CD14-positive monocyte (primary cell): ENCODE measurements at regions of chr18 and their contacts with region 1.

Region 1: DNA sequence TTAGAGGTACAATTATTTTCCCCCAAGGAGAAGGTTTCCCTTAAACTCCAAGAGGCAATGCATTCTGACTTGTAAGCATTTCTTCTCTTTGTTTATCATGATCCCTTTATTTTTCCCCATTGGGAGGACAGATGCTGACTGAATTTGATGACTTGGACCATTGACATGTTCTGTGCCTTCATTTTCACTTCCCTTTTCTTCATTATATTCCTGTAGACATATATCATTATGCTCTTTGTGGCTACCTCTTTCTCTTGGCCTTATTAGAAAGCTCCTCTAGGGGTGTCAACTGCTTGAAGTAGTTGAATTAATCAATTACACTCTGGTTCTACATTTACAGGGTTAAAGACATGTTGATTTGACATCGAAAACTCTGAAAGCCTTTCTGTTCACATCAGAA is 330.0 kb upstream of the DCC start:
- DNase-seq: no peak
- H3K4me3 ChIP-seq: no peak overlapping the region
- H3K4me3 Mint-ChIP-seq: no peak overlapping the region
- H3K27ac ChIP-seq: no peak overlapping the region
- H3K27ac Mint-ChIP-seq: no peak overlapping the region
- H3K4me1 ChIP-seq: no peaks in the 10 kb centered on the region
- H3K4me1 Mint-ChIP-seq: no peaks in the 10 kb centered on the region
- H3K27me3 ChIP-seq: no peaks in the 10 kb centered on the region
- H3K27me3 Mint-ChIP-seq: no peaks in the 10 kb centered on the region
- CTCF ChIP-seq: no peak

Region 2: GRCh38 chr18:51941999-51942398 is 68.0 kb before region 1 on chr18:
- intact Hi-C with region 1: loop called in 1 of 2 experiments (anchors 10 kb)
- DNase-seq: no peak
- H3K4me3 ChIP-seq: no peak overlapping the region
- H3K4me3 Mint-ChIP-seq: no peak overlapping the region
- H3K27ac ChIP-seq: no peak overlapping the region
- H3K27ac Mint-ChIP-seq: no peak overlapping the region
- H3K4me1 ChIP-seq: no peaks in the 10 kb centered on the region
- H3K4me1 Mint-ChIP-seq: no peaks in the 10 kb centered on the region
- H3K27me3 ChIP-seq: no peaks in the 10 kb centered on the region
- H3K27me3 Mint-ChIP-seq: no peaks in the 10 kb centered on the region
- CTCF ChIP-seq: no peak

Region 3: DNA sequence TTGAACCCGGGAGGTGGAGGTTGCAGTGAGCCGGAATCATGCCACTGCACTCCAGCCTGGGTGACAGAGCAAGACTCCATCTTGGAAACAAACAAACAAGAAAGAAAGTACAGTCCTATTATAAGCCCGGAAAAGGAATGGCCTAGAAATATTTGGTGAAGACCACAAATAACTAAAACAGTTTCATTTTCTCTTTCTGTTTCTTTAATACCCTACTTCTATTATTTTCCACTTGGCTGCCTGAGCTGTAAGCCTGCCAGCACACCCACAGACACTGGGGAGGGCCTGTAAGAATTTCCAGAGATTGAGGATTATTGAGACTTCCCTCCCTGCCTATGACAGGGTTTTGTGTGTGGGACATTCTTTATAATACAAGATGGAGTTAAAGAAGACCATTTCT is 142.1 kb after region 1 on chr18:
- intact Hi-C with region 1: no loop called
- DNase-seq: no peak
- H3K4me3 ChIP-seq: no peak overlapping the region
- H3K4me3 Mint-ChIP-seq: no peak overlapping the region
- H3K27ac ChIP-seq: no peak overlapping the region
- H3K27ac Mint-ChIP-seq: no peak overlapping the region
- H3K4me1 ChIP-seq: no peaks in the 10 kb centered on the region
- H3K4me1 Mint-ChIP-seq: no peaks in the 10 kb centered on the region
- H3K27me3 ChIP-seq: no peaks in the 10 kb centered on the region
- H3K27me3 Mint-ChIP-seq: no peaks in the 10 kb centered on the region
- CTCF ChIP-seq: no peak